Keratinocyte (primary cell): ENCODE measurements at regions of chr5 and their contacts with region 1.

Region 1: GRCh38 chr5:38809388-38810359 is 36.1 kb upstream of the OSMR start:
- DNase-seq: no peak
- H3K4me3 ChIP-seq: no peak overlapping the region
- H3K27ac ChIP-seq: no peak overlapping the region
- H3K4me1 ChIP-seq: peaks cover 5% of the 10 kb centered on the region
- H3K27me3 ChIP-seq: no peaks in the 10 kb centered on the region
- CTCF ChIP-seq: peak; percentile 80 to 91 (median 86)

Region 2: GRCh38 chr5:38441453-38442246 is 368.0 kb before region 1 on chr5:
- dilution Hi-C with region 1: loop called (anchors 10 kb)
- DNase-seq: no peak
- H3K4me3 ChIP-seq: no peak overlapping the region
- H3K27ac ChIP-seq: no peak overlapping the region
- H3K4me1 ChIP-seq: no peaks in the 10 kb centered on the region
- H3K27me3 ChIP-seq: no peaks in the 10 kb centered on the region
- CTCF ChIP-seq: peak; percentile 95 to 98 (median 97)